ENCODE measurements at regions of chr18 and their contacts with region 1.

Region 1: DNA sequence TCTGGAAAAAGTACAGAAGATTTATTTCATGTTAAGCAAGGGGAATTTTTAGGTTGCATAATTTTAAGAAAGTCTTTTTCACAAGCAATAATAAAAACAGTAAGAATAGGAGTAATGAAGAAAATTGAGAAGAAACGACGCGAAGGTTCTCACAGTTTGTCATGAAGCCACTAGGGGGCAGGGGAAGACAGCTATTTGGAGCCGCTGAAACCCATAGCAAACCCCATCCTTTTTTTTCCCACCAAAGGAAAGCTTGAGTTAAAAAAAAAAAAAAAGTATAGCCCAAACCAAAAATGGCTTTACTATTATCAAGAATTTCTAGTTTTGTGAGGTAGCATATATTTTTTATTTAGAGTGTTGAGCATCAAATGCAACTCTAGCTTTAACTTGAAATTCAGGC is 300.9 kb downstream of the PHLPP1 start:
- DNase-seq: peak; percentile 72
- CTCF ChIP-seq: peak; percentile 66

Region 2: GRCh38 chr18:62651276-62652056 is 364.8 kb before region 1 on chr18:
- CTCF ChIA-PET with region 1: no interaction called
- POLR2A ChIA-PET with region 1: no interaction called
- DNase-seq: no peak
- CTCF ChIP-seq: no peak

Region 3: DNA sequence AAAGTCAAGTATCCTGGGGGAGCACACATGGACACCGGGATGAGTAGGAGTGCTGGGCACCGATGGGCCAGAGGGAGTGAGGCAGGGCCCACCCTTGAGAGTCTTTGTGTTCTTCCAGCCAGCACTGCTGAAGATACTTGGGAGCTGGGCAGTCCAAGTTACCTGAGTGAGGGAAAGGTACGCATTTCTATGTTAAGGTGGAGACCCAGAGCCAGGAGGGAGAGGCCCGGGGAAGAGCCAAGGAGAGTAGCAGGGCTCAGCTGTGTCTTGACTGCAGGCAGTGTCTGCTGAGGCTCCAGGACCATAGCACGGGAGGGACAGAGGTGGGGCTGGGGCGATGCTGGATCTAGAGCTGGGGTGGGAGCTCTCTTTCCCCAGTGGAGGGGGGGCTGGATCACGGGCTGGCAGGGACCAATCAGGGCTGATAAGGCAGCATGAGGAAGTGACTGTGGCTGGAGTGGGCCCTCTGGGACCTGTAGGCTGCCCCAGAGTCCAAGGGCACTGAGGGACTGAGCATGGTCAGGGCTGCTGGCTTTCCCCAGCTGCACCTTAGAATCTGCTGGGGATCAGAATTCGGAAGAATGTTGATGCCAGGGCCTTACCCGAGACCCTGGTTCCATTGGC is 11.7 kb before region 1 on chr18:
- CTCF ChIA-PET with region 1: interaction called, 32 read pairs
- POLR2A ChIA-PET with region 1: no interaction called
- DNase-seq: no peak
- CTCF ChIP-seq: no peak

Region 4: DNA sequence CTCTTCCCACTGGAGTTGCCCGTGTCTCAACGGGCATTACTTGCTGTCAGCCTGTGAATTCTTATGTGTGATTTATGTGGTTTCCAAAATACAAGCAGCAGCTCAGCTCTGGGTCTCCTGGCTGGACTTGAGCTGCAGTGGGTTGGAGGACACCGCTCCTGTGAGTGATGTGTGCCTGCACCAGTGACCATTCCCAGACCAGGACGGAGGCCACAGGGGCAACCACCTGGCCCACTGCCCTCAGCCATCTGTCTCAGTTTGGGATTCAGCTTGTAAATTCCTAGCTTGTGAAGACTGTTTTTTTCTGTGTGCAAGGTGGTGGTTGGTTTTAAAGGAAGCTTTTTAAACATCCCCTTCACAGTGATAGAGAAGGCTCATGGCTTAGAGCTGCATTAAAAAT is 42.3 kb after region 1 on chr18:
- CTCF ChIA-PET with region 1: interaction called, 16 read pairs
- POLR2A ChIA-PET with region 1: no interaction called
- DNase-seq: no peak
- CTCF ChIP-seq: no peak

Region 5: GRCh38 chr18:63098018-63098981 is 82.0 kb after region 1 on chr18:
- CTCF ChIA-PET with region 1: interaction called, 14 read pairs
- POLR2A ChIA-PET with region 1: no interaction called
- DNase-seq: peak; percentile 65
- CTCF ChIP-seq: no peak

Region 6: GRCh38 chr18:63138436-63139340 is 122.4 kb after region 1 on chr18:
- CTCF ChIA-PET with region 1: interaction called, 12 read pairs
- POLR2A ChIA-PET with region 1: no interaction called
- DNase-seq: peak; percentile 51
- CTCF ChIP-seq: no peak

Region 7: DNA sequence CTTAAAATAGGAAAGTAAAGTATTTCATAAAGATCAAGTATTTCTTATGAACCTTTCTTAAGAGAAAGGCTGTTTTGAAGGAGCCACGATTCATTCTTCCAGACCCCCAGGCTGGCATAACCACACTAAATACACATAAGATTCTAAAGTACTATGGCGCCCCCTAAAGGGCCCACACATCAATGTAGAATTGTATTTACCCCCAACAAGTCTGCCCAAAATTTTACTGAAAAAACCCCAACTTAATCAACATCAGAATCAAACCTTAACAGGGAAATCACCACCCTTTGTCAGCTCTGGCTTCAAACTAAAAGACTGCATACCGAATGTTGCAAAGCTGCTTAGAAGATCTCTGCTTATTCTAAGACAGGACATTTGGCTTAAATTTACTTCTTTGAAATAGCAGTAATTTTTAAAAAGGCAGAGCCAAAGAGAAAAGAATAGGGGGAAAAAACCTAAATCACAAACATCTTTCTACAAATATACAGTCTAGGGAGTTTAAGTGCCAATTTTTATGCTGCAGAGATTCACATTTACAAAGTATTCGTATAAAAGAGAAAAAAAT is 323.7 kb after region 1 on chr18:
- CTCF ChIA-PET with region 1: interaction called, 36 read pairs
- POLR2A ChIA-PET with region 1: no interaction called
- DNase-seq: no peak
- CTCF ChIP-seq: peak; percentile 28

Measured in GM10248 (cell line).